ENCODE measurements at regions of chr3 and their contacts with region 1.

Region 1: GRCh38 chr3:161914737-161915417 is 418.3 kb downstream of the OTOL1 start:
- DNase-seq: peak; percentile 90
- H3K4me3 ChIP-seq: no peak overlapping the region
- H3K27ac ChIP-seq: peak overlapping the region; percentile 51
- H3K4me1 ChIP-seq: peaks cover 25% of the 10 kb centered on the region
- H3K27me3 ChIP-seq: no peaks in the 10 kb centered on the region
- CTCF ChIP-seq: peak; percentile 88

Region 2: GRCh38 chr3:161559177-161559998 is 355.5 kb before region 1 on chr3:
- CTCF ChIA-PET with region 1: no interaction called
- POLR2A ChIA-PET with region 1: no interaction called
- intact Hi-C with region 1: loop called (anchors 5 kb)
- DNase-seq: peak; percentile 75
- H3K4me3 ChIP-seq: peak overlapping the region; percentile 26
- H3K27ac ChIP-seq: no peak overlapping the region
- H3K4me1 ChIP-seq: peaks cover 17% of the 10 kb centered on the region
- H3K27me3 ChIP-seq: no peaks in the 10 kb centered on the region
- CTCF ChIP-seq: peak; percentile 91

Region 3: GRCh38 chr3:162088668-162089067 is 173.8 kb after region 1 on chr3:
- CTCF ChIA-PET with region 1: no interaction called
- POLR2A ChIA-PET with region 1: no interaction called
- intact Hi-C with region 1: loop called (anchors 1 kb)
- DNase-seq: peak; percentile 42
- H3K4me3 ChIP-seq: no peak overlapping the region
- H3K27ac ChIP-seq: no peak overlapping the region
- H3K4me1 ChIP-seq: peaks cover 16% of the 10 kb centered on the region
- H3K27me3 ChIP-seq: no peaks in the 10 kb centered on the region
- CTCF ChIP-seq: peak; percentile 36; the same call in 1 of the 2 replicates

Region 4: DNA sequence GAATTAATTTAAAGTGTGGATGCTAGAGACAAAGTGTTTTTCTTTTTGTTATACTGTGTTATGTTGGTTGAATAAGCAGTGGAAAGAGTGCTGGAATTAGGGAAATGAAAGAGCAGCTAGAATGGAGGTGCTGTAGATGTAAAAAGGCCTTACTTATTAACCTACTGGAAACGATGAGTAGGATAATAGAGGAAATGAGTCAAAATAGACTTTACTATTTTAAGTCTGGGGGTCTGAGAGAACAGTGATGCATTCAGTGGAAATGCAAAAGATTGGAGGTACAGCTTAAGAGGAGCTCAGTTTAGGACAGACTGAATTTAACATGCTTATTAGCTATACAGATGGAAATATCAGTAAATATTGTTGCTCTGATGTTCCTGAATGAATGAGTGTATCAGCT is 255.7 kb after region 1 on chr3:
- CTCF ChIA-PET with region 1: no interaction called
- POLR2A ChIA-PET with region 1: no interaction called
- intact Hi-C with region 1: no loop called
- DNase-seq: peak; percentile 39
- H3K4me3 ChIP-seq: no peak overlapping the region
- H3K27ac ChIP-seq: no peak overlapping the region
- H3K4me1 ChIP-seq: peaks cover 5% of the 10 kb centered on the region
- H3K27me3 ChIP-seq: no peaks in the 10 kb centered on the region
- CTCF ChIP-seq: no peak

Region 5: GRCh38 chr3:163056874-163057497 is 1142.1 kb after region 1 on chr3:
- CTCF ChIA-PET with region 1: no interaction called
- POLR2A ChIA-PET with region 1: no interaction called
- intact Hi-C with region 1: loop called (anchors 10 kb)
- DNase-seq: peak; percentile 88
- H3K4me3 ChIP-seq: no peak overlapping the region
- H3K27ac ChIP-seq: peak overlapping the region; percentile 41
- H3K4me1 ChIP-seq: no peaks in the 10 kb centered on the region
- H3K27me3 ChIP-seq: no peaks in the 10 kb centered on the region
- CTCF ChIP-seq: peak; percentile 67

Region 6: DNA sequence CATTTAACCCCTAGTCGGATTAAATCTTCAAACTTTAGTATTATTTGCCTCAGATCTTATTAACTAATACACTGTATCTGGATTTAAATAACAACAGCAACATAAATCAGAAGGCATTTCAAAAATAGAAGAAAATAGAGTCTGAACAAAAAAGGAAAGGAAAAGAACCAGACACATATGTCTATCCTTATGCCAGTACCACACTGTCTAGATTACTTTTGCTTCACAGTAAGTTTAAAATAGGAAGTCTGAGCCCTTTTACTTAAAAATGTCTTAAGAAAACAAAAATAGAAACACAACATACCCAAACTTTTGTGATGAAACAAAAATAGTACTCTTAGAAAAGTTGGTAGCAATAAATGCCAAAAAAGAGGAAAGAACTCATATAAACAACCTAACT is 1547.6 kb after region 1 on chr3:
- CTCF ChIA-PET with region 1: no interaction called
- POLR2A ChIA-PET with region 1: no interaction called
- intact Hi-C with region 1: loop called (anchors 10 kb)
- DNase-seq: no peak
- H3K4me3 ChIP-seq: no peak overlapping the region
- H3K27ac ChIP-seq: peak overlapping the region; percentile 50
- H3K4me1 ChIP-seq: no peaks in the 10 kb centered on the region
- H3K27me3 ChIP-seq: no peaks in the 10 kb centered on the region
- CTCF ChIP-seq: no peak

Measured in A673 (cell line).